GM10248 (cell line): ENCODE measurements at regions of chr10 and their contacts with region 1.

Region 1: GRCh38 chr10:80662577-80663261 is 125.0 kb downstream of the SH2D4B start:
- DNase-seq: peak; percentile 73
- CTCF ChIP-seq: peak; percentile 98

Region 2: DNA sequence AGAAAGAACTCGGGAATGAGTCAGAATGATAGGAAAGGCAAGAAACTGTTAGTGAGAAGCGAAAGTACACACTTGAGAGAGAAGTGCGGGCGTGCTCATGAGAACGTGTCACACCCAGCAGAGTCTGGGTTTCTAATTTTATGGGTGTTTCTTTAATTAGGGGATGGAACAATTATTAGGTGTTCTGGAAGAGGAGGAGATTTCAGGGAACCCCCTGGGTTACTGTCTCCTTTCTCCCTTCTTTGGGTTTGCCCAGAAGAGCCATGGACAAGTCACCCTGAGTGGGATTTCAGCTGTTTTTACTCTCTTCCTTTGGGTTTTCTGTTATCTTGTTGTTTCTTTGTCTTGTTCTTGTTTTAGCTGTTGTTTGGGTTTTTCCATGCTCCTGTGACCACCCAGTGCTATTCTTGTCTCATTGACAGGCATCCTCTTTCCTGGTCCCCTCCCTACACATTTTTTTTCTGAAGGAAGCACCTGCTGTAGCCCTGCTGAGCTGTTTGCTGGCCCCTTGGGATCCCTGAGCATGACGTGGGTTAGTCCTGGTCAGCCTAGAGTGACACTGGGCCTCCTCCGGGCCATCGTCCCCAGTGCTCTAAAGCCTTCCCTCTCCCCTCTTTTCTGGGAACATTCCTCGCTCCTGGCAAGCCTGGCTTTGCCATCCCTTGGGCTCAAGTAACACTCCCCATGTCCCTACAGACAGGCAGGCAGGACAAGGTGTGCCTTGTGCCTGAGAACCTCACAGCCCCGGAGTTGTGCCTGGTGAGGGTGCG is 121.6 kb before region 1 on chr10:
- CTCF ChIA-PET with region 1: interaction called, 14 read pairs
- POLR2A ChIA-PET with region 1: no interaction called
- DNase-seq: peak; percentile 63
- CTCF ChIP-seq: no peak

Region 3: GRCh38 chr10:80619036-80619435 is 43.7 kb before region 1 on chr10:
- CTCF ChIA-PET with region 1: interaction called, 15 read pairs
- POLR2A ChIA-PET with region 1: no interaction called
- DNase-seq: no peak
- CTCF ChIP-seq: no peak

Region 4: DNA sequence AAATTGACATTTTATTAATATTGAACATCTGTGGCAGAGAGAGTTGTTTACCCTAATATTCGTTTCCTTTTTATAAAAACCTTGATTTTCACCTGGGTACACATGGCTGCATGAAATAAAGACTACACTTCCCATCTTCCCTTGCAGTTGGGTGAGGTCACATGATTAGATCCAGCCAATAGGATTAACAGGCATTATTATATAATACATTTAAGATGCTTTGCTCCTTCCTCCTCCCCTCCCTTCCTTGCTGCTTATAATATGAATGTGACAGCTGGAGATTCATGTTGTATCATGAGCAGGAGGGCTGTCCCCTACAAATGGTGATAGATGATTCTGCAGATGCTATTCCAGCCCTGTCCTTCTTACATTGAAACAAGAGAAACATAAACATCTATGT is 21.5 kb after region 1 on chr10:
- CTCF ChIA-PET with region 1: interaction called, 43 read pairs
- POLR2A ChIA-PET with region 1: no interaction called
- DNase-seq: no peak
- CTCF ChIP-seq: no peak

Region 5: GRCh38 chr10:80709866-80710265 is 47.1 kb after region 1 on chr10:
- CTCF ChIA-PET with region 1: interaction called, 13 read pairs
- POLR2A ChIA-PET with region 1: no interaction called
- DNase-seq: no peak
- CTCF ChIP-seq: no peak

Region 6: DNA sequence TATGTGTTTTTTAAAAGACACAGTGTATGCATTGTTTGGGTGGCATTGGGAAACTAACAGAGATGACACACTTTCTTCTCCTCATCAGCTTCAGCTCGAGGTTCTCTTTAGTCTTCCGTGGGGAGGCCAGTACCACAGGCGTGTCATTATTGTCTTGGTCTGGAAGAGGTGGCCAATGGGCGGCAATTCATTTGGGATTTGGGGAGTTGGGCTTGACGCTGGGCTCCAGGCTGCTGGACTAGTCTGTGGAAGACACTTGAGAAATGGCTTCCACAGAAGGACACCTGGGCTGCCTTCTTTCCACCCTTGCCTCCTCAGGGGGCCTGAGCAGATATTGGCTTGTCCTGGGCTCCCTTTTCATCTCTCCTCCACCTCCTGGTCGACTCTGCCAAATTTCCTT is 67.2 kb after region 1 on chr10:
- CTCF ChIA-PET with region 1: no interaction called
- POLR2A ChIA-PET with region 1: no interaction called
- DNase-seq: no peak
- CTCF ChIP-seq: no peak

Region 7: DNA sequence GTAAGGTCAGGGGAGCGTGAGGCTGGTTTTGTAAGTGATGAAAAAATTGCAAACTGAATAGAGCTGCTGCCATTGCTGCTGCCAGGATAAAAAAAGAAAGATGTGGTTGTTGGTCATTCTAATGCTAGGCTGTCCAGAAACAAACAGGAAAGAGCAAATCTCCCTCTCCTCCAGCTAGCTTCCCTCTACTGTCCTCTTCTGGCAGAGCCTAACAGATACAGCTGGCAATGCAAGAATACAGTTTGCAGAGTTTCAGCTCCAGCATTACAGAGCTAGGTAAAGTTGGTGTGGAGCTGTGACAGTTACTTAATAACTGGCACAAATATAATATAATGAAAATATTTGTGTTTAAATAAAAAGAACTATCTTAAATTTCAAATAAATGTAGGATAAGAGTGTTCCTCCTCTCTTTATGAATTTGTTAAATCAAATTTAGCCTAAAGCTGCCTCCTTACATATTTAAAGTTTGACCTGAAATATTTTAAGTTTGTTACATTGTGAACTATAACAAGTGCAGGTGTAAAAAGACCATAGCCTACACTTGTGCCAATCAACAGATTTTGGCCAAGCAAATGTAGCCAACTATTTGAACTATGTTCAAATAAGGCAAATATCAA is 282.7 kb after region 1 on chr10:
- CTCF ChIA-PET with region 1: interaction called, 14 read pairs
- POLR2A ChIA-PET with region 1: no interaction called
- DNase-seq: peak; percentile 10
- CTCF ChIP-seq: peak; percentile 58

Region 8: GRCh38 chr10:81179805-81180452 is 517.2 kb after region 1 on chr10:
- CTCF ChIA-PET with region 1: interaction called, 28 read pairs
- POLR2A ChIA-PET with region 1: no interaction called
- DNase-seq: peak; percentile 35
- CTCF ChIP-seq: peak; percentile 64